ENCODE measurements at regions of chr16 and their contacts with region 1.

Region 1: GRCh38 chr16:90022209-90023064 is 3.2 kb upstream of the DBNDD1 start:
- DNase-seq: peak in 1 of 2 experiments; percentile 83
- H3K4me3 ChIP-seq: peak overlapping the region; percentile 23 to 55 (median 32); a peak in 6 of 8 replicates
- H3K27ac ChIP-seq: peak overlapping the region; percentile 63; the same call in 1 of the 2 replicates
- H3K4me1 ChIP-seq: peaks cover 8 to 12% (median 8%) of the 10 kb centered on the region in 4 experiments; a peak in 6 of 7 replicates
- H3K27me3 ChIP-seq: no peaks in the 10 kb centered on the region; a peak in 2 of 7 replicates
- CTCF ChIP-seq: no peak
- EP300 ChIP-seq: no peak
- POLR2A ChIP-seq: peak in 1 of 2 experiments; percentile 48; a peak in 2 of 3 replicates
- RAD21 ChIP-seq: no peak

Region 2: DNA sequence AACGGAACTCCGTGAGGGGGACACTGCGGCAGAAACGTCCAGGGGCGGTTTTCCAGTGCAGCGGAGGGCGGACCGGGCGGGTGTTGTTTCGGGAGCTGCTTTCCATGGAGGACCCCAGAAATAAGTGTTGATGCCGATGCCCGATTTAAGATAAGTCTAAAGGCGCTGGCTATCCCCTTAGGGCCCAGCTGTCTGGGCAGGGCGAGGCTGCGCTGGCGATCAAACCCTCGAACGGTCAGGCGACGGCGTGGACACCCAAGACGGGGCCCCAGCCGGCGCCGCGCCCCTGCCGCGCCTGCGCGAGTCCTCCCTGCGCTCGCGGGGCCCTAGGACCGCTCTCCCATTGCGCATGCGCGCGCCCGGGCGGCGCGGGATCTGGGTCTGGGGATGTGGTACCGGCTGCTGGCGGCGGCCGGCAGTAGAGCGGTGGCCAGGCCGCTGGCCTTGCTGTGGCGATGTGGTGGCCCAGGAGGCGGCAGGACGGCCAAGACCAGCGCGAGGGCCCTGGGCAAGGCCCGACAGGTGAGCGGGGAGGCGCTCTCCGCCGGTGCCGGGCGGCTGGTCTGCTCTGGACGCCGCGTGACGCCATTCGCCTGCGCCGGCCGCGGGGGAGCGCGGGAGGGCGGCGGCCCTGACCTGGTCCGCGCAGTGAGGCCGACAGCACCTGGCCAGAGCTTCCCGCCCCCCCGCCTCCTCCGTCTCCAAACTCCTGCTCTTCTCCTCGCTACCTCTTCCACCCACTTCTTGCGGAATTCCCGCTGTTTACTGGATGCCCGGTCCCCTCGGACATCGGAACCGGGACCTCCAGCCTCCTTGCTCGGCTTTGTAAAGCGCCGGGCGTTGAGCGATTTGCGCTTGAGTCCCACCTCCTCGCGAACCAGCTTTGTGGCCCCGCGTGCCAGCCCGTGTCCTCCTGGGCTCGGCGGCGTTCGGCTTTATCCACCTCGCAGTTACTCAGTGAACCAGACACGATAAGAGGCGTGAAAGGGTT is 49.9 kb before region 1 on chr16:
- CTCF ChIA-PET with region 1: interaction called, 4 read pairs
- POLR2A ChIA-PET with region 1: interaction called, 20 read pairs
- DNase-seq: peak; percentile 67 to 95
- H3K4me3 ChIP-seq: peak overlapping the region; percentile 77 to 97 (median 94)
- H3K27ac ChIP-seq: peak overlapping the region; percentile 99
- H3K4me1 ChIP-seq: peaks cover 0 to 8% (median 3%) of the 10 kb centered on the region in 4 experiments; a peak in 3 of 7 replicates
- H3K27me3 ChIP-seq: peaks cover 0 to 6% (median 0%) of the 10 kb centered on the region in 4 experiments; a peak in 2 of 7 replicates
- CTCF ChIP-seq: no peak
- EP300 ChIP-seq: no peak
- POLR2A ChIP-seq: peak; percentile 81 to 98
- RAD21 ChIP-seq: no peak

Region 3: GRCh38 chr16:89999831-90000574 is 22.4 kb before region 1 on chr16:
- CTCF ChIA-PET with region 1: interaction called, 9 read pairs
- POLR2A ChIA-PET with region 1: interaction called, 81 read pairs
- DNase-seq: no peak
- H3K4me3 ChIP-seq: no peak overlapping the region
- H3K27ac ChIP-seq: no peak overlapping the region
- H3K4me1 ChIP-seq: no peaks in the 10 kb centered on the region
- H3K27me3 ChIP-seq: no peaks in the 10 kb centered on the region
- CTCF ChIP-seq: peak; percentile 19 to 62 (median 49); a peak in 3 of 4 replicates
- EP300 ChIP-seq: no peak
- POLR2A ChIP-seq: no peak
- RAD21 ChIP-seq: no peak; a peak in 1 of 4 replicates

Region 4: DNA sequence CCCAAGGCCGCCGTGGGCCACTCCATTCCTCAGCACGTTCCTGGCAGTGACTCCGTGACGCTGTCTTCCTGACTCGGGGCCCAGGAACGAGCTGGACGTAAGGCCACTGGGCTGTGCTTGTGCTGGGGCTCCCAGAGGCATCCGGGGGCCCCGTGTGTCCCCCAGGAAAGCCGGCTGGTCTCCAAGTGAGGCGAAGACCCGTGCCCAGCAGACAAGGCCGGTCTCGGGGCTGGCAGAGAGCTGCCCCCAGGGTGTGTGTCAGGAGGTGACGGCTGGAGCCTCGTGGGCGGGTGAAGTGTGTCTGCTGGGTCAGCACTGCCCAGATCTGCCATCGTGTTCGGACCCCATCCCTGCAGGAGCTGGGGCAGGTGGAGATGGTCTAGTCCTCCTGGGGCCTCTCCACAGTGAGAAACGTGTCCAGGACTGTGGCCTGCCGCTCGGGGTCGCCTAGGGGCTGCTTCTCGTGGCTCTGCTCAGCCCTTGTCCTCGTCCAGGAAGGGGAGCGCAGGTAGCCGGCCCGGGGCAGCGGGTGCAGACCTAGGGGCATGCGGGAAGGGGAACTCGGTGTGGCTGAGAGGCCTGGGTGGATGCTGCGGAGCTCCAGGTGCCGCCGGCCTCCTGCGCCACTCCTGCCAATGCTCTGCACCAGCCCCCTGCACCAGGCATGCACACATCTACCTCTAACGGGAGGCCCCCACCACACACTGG is 16.3 kb before region 1 on chr16:
- CTCF ChIA-PET with region 1: interaction called, 3 read pairs
- POLR2A ChIA-PET with region 1: interaction called, 81 read pairs
- DNase-seq: no peak
- H3K4me3 ChIP-seq: no peak overlapping the region
- H3K27ac ChIP-seq: no peak overlapping the region
- H3K4me1 ChIP-seq: no peaks in the 10 kb centered on the region; a peak in 1 of 7 replicates
- H3K27me3 ChIP-seq: no peaks in the 10 kb centered on the region
- CTCF ChIP-seq: no peak
- EP300 ChIP-seq: no peak
- POLR2A ChIP-seq: no peak
- RAD21 ChIP-seq: no peak

Measured in H1 (cell line).